Endothelial cell of umbilical vein (primary cell): ENCODE measurements at regions of chr12 and their contacts with region 1.

Region 1: DNA sequence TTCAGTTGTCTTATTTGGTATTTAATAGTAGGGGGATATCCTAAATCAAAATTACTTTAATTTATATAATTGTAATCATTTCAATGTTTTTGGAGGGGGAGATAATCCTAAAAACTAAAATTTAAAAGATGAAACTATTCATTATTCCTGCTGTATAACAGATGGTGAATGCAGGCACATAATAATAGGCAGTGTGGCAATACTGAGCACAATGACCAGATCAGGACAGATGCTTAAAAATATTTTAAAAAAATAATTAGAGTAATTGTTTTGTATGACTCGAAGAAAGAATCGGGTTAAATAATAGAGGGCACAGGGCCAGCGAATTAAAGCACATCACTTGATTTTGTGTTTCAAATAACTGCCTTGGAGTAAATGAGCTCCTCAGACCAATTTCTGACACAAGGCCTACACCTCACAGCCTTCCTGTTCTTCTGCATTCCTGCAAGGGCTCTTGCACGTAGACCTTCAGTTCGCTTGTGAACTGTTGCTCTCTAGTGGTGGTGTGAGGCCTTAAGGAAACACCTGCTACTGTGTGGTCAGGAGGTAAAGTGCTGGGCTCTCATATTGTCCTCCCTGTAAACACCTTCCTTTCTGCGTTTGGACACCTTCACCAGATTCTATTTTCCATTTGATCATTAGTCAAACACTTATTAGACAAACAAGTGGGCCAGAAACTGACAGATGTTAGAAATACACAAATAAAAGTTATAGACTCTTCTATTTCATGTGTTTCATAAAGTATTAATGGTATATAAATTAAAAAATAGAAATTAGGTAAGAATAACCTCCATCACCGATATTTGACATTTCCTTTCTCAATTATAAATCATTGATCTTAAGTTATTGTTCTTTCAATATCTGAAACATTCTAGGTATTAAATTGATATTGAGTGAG is 29.3 kb upstream of the KLRF1 start:
- DNase-seq: peak; percentile 87
- H3K4me3 ChIP-seq: no peak overlapping the region
- H3K27ac ChIP-seq: peak overlapping the region; percentile 1
- H3K4me1 ChIP-seq: peaks cover 39% of the 10 kb centered on the region
- H3K27me3 ChIP-seq: no peaks in the 10 kb centered on the region
- CTCF ChIP-seq: peak; percentile 54 to 67
- POLR2A ChIP-seq: no peak

Region 2: GRCh38 chr12:9634177-9634803 is 163.7 kb before region 1 on chr12:
- CTCF ChIA-PET with region 1: interaction called, 3 read pairs
- POLR2A ChIA-PET with region 1: no interaction called
- dilution Hi-C with region 1: no loop called
- intact Hi-C with region 1: loop called (anchors 1 kb)
- DNase-seq: peak; percentile 70
- H3K4me3 ChIP-seq: no peak overlapping the region
- H3K27ac ChIP-seq: no peak overlapping the region
- H3K4me1 ChIP-seq: no peaks in the 10 kb centered on the region
- H3K27me3 ChIP-seq: no peaks in the 10 kb centered on the region
- CTCF ChIP-seq: peak; percentile 55 to 57
- POLR2A ChIP-seq: no peak

Region 3: DNA sequence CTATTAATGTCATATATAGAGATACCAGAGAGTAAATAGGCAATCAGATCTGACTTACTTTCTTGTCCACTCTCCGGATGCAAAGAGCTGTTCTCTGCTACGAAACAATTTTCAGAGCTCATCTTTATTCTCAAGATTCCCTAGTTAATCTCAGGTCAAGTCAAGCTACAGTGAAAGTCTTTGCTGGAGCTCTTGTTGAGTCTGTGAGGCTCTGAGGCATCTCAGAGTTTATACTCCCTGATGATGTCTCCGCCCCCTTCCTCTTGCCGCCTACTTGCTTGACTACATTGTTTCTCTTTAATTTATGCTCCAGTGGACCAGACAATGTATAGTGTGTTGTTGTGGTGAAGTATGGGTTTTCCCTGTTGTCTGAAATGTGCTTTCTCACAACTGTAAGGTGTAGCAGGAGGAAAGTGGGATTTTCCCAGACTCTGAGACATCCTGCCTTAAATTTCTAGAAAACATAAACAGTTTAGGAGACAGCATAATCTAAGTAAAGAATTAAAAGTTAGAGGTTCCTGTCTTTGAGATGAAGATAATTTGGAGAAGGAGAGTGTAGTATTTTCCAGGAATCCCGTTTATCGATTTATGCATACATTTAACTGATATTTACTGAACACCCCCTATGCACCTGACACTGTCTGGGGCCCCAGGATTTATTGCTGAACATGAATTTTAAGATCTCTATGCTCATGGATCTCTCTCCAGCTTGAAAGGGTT is 37.1 kb before region 1 on chr12 and contains the start of gene CD69:
- CTCF ChIA-PET with region 1: interaction called, 332 read pairs
- POLR2A ChIA-PET with region 1: no interaction called
- dilution Hi-C with region 1: no loop called
- intact Hi-C with region 1: no loop called
- DNase-seq: peak; percentile 71
- H3K4me3 ChIP-seq: peak within 1 kb of the TSS in 2 of 3 experiments; percentile 0 to 15
- H3K27ac ChIP-seq: no peak within 1 kb of the TSS
- H3K4me1 ChIP-seq: peaks cover 13% of the 10 kb centered on the region
- H3K27me3 ChIP-seq: no peaks in the 10 kb centered on the region
- CTCF ChIP-seq: no peak
- POLR2A ChIP-seq: no peak
- total RNA-seq, gene CD69: 0.49 and 1.2 TPM in 2 replicates

Region 4: GRCh38 chr12:9773216-9773877 is 24.6 kb before region 1 on chr12:
- CTCF ChIA-PET with region 1: interaction called, 8 read pairs
- POLR2A ChIA-PET with region 1: no interaction called
- dilution Hi-C with region 1: no loop called
- intact Hi-C with region 1: loop called (anchors 1 kb)
- DNase-seq: no peak
- H3K4me3 ChIP-seq: no peak overlapping the region
- H3K27ac ChIP-seq: no peak overlapping the region
- H3K4me1 ChIP-seq: peaks cover 10% of the 10 kb centered on the region
- H3K27me3 ChIP-seq: no peaks in the 10 kb centered on the region
- CTCF ChIP-seq: no peak
- POLR2A ChIP-seq: no peak